MCF 10A (cell line): ENCODE measurements at regions of chr2 and their contacts with region 1.

Region 1: GRCh38 chr2:158753641-158754611 is 41.2 kb upstream of the DAPL1 start:
- DNase-seq: peak; percentile 70
- H3K4me3 Mint-ChIP-seq: no peak overlapping the region
- H3K27ac Mint-ChIP-seq: no peak overlapping the region
- H3K4me1 Mint-ChIP-seq: no peaks in the 10 kb centered on the region
- H3K27me3 Mint-ChIP-seq: peaks cover 29% of the 10 kb centered on the region
- CTCF ChIP-seq: peak; percentile 69

Region 2: DNA sequence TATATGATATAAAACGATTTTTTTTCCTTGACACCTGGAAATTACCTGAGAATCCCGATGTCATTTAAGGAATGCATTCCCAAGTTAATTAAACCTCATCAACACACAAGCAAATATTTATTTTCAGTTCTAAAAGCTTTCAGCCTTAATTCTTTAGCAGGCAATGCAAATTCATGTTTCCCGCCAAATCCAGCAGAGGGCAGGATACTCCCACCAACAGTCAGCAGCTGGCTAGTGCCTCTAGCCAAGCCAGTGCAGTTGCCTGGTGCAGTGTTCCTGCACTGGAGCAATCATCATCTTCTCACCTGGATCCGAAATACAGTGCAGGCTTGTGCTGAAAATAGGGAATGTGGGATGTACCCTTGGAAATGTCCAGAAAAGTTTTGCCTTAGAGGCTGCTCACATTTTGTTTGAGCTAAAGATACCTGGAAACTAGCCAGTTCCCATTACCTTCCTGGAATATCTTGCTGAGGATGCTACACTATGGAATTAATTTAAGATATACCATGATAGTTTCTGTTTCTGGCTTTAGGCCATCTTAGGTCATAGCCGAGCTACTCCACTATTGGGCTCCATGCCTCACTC is 1261.6 kb before region 1 on chr2:
- CTCF ChIA-PET with region 1: no interaction called
- POLR2A ChIA-PET with region 1: no interaction called
- intact Hi-C with region 1: loop called (anchors 10 kb)
- DNase-seq: peak; percentile 73
- H3K4me3 Mint-ChIP-seq: no peak overlapping the region
- H3K27ac Mint-ChIP-seq: no peak overlapping the region
- H3K4me1 Mint-ChIP-seq: peaks cover 21% of the 10 kb centered on the region
- H3K27me3 Mint-ChIP-seq: no peaks in the 10 kb centered on the region
- CTCF ChIP-seq: peak; percentile 58

Region 3: GRCh38 chr2:158034199-158034866 is 719.6 kb before region 1 on chr2:
- CTCF ChIA-PET with region 1: interaction called, 435 read pairs
- POLR2A ChIA-PET with region 1: no interaction called
- intact Hi-C with region 1: loop called (anchors 1 kb)
- DNase-seq: peak; percentile 68
- H3K4me3 Mint-ChIP-seq: no peak overlapping the region
- H3K27ac Mint-ChIP-seq: no peak overlapping the region
- H3K4me1 Mint-ChIP-seq: no peaks in the 10 kb centered on the region
- H3K27me3 Mint-ChIP-seq: peaks cover 16% of the 10 kb centered on the region
- CTCF ChIP-seq: peak; percentile 55

Region 4: GRCh38 chr2:158179660-158180059 is 574.3 kb before region 1 on chr2:
- CTCF ChIA-PET with region 1: interaction called, 38 read pairs
- POLR2A ChIA-PET with region 1: no interaction called
- intact Hi-C with region 1: no loop called
- DNase-seq: peak; percentile 26
- H3K4me3 Mint-ChIP-seq: no peak overlapping the region
- H3K27ac Mint-ChIP-seq: no peak overlapping the region
- H3K4me1 Mint-ChIP-seq: no peaks in the 10 kb centered on the region
- H3K27me3 Mint-ChIP-seq: peaks cover 19% of the 10 kb centered on the region
- CTCF ChIP-seq: peak; percentile 37

Region 5: DNA sequence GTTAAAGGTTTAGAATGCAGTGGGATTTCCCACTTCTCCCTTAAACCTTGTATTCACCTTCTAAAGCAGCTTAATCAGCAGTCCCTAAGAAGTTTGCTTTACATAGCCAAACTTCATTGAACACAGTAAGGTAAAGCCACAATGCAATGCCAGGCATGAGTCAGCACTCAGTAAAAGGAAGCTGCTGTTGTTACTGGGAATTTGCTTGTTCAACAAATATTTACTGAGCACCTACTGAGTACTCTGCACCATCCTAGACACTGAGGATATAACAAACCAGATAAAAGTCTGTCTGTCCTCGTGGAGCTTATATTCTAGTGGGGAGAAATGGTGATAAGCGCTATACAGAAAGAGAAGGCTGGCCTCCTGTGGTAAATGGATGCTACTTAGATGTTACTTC is 134.4 kb before region 1 on chr2:
- CTCF ChIA-PET with region 1: interaction called, 10 read pairs
- POLR2A ChIA-PET with region 1: no interaction called
- intact Hi-C with region 1: no loop called
- DNase-seq: peak; percentile 62
- H3K4me3 Mint-ChIP-seq: no peak overlapping the region
- H3K27ac Mint-ChIP-seq: peak overlapping the region; percentile 57
- H3K4me1 Mint-ChIP-seq: peaks cover 11% of the 10 kb centered on the region
- H3K27me3 Mint-ChIP-seq: no peaks in the 10 kb centered on the region
- CTCF ChIP-seq: no peak

Region 6: GRCh38 chr2:158773121-158773520 is 19.2 kb after region 1 on chr2:
- CTCF ChIA-PET with region 1: interaction called, 11 read pairs
- POLR2A ChIA-PET with region 1: no interaction called
- intact Hi-C with region 1: no loop called
- DNase-seq: peak; percentile 29
- H3K4me3 Mint-ChIP-seq: no peak overlapping the region
- H3K27ac Mint-ChIP-seq: no peak overlapping the region
- H3K4me1 Mint-ChIP-seq: no peaks in the 10 kb centered on the region
- H3K27me3 Mint-ChIP-seq: no peaks in the 10 kb centered on the region
- CTCF ChIP-seq: no peak

Region 7: GRCh38 chr2:158953926-158954763 is 200.2 kb after region 1 on chr2:
- CTCF ChIA-PET with region 1: no interaction called
- POLR2A ChIA-PET with region 1: no interaction called
- intact Hi-C with region 1: no loop called
- DNase-seq: peak; percentile 93
- H3K4me3 Mint-ChIP-seq: peak overlapping the region; percentile 7
- H3K27ac Mint-ChIP-seq: peak overlapping the region; percentile 75
- H3K4me1 Mint-ChIP-seq: peaks cover 14% of the 10 kb centered on the region
- H3K27me3 Mint-ChIP-seq: no peaks in the 10 kb centered on the region
- CTCF ChIP-seq: no peak